Right cardiac atrium (tissue), 5 donors: ENCODE measurements at regions of chr22 and their contacts with region 1.

Region 1: GRCh38 chr22:33028234-33028633 is 29.9 kb downstream of the SYN3 start:
- DNase-seq: no peak
- ATAC-seq: no peak
- H3K4me3 ChIP-seq: no peak overlapping the region
- H3K27ac ChIP-seq: no peak overlapping the region
- H3K4me1 ChIP-seq: no peaks in the 10 kb centered on the region
- H3K27me3 ChIP-seq: no peaks in the 10 kb centered on the region

Region 2: GRCh38 chr22:33202455-33202854 is 174.2 kb after region 1 on chr22:
- intact Hi-C with region 1: loop called in 2 of 4 experiments (anchors 5 to 10 kb)
- DNase-seq: no peak
- ATAC-seq: no peak
- H3K4me3 ChIP-seq: no peak overlapping the region
- H3K27ac ChIP-seq: no peak overlapping the region
- H3K4me1 ChIP-seq: no peaks in the 10 kb centered on the region
- H3K27me3 ChIP-seq: peaks cover 2% of the 10 kb centered on the region

Region 3: DNA sequence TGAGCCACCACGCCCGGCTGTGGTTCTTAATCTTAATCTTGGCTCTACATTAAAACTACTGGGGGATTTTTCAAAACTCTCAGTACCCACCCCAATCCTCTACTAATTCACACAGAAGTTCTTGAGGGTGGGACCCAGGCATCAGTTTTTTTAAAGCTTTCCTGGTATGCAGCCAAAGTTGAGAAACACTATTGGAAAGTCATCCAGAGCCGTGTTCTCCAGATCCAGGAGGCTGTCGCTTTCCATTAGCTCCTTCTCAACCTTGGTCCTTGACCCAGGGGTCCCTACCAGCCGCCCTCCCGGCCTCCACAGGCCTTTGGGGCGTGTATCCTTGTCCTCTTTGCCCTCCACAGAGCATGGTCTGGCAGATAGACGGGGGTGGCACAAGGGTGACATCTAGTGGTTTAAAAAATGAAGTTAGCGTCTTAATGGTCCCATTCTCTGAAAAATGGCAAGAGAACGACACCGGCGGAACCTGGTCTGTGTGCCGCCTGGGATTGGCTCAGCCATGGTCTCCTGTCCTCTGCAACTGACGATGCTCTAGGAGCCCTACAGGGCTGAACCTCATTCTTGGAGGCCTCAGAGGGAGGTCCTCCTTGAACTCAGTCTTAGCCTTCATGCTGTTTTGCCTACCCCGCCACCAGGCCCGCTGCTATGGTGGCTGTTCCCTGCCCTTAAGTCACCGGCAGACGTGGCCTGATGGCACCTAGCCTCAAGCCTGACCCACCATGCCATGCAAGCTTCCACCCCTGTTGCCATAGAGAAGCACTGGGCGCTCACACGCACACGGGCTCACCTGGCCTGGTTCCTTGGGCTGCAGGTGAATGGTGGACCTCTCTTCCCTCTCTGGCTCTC is 181.9 kb after region 1 on chr22:
- intact Hi-C with region 1: loop called in 1 of 4 experiments (anchors 10 kb)
- DNase-seq: peak in 2 of 3 donors; percentile 17 to 50
- ATAC-seq: peak; percentile 48 to 81
- H3K4me3 ChIP-seq: no peak overlapping the region
- H3K27ac ChIP-seq: no peak overlapping the region
- H3K4me1 ChIP-seq: no peaks in the 10 kb centered on the region
- H3K27me3 ChIP-seq: peaks cover 5% of the 10 kb centered on the region